Activated T-helper 1 cell treated with anti-CD3 and anti-CD28 coated beads, Interleukin-12 subunit alpha, Interleukin-12 subunit beta, Interleukin-2, Interleukin-4 antibody, amounts not matched to agents 30 ng/mL and 10 ng/mL and 1 ng/mL, durations not matched to agents 14 hours and 24 hours and 36 hours (primary cell): ENCODE measurements at regions of chr10 and their contacts with region 1.

Region 1: GRCh38 chr10:73848821-73849489 is 25.4 kb downstream of the CAMK2G start:
- DNase-seq: peak; percentile 88
- H3K4me3 Mint-ChIP-seq: peak overlapping the region; percentile 64
- H3K27ac Mint-ChIP-seq: peak overlapping the region; percentile 78
- H3K4me1 Mint-ChIP-seq: peaks cover 13% of the 10 kb centered on the region
- H3K27me3 Mint-ChIP-seq: peaks cover 1% of the 10 kb centered on the region

Region 2: GRCh38 chr10:73772280-73773151 is 76.4 kb before region 1 on chr10:
- intact Hi-C with region 1: loop called (anchors 1 kb)
- DNase-seq: peak; percentile 85
- H3K4me3 Mint-ChIP-seq: peak overlapping the region; percentile 94
- H3K27ac Mint-ChIP-seq: peak overlapping the region; percentile 91
- H3K4me1 Mint-ChIP-seq: peaks cover 67% of the 10 kb centered on the region
- H3K27me3 Mint-ChIP-seq: no peaks in the 10 kb centered on the region

Region 3: GRCh38 chr10:73874267-73875138 is 25.5 kb after region 1 on chr10 and contains the start of gene CAMK2G:
- intact Hi-C with region 1: loop called (anchors 1 kb)
- DNase-seq: peak; percentile 77
- H3K4me3 Mint-ChIP-seq: peak within 1 kb of the TSS; percentile 87
- H3K27ac Mint-ChIP-seq: peak within 1 kb of the TSS; percentile 58
- H3K4me1 Mint-ChIP-seq: peaks cover 72% of the 10 kb centered on the region
- H3K27me3 Mint-ChIP-seq: peaks cover 12% of the 10 kb centered on the region
- total RNA-seq, gene CAMK2G: 15.9 and 18.7 TPM in 2 replicates

Region 4: GRCh38 chr10:73940634-73941221 is 91.8 kb after region 1 on chr10:
- intact Hi-C with region 1: loop called (anchors 1 kb)
- DNase-seq: peak; percentile 80
- H3K4me3 Mint-ChIP-seq: no peak overlapping the region
- H3K27ac Mint-ChIP-seq: no peak overlapping the region
- H3K4me1 Mint-ChIP-seq: peaks cover 24% of the 10 kb centered on the region
- H3K27me3 Mint-ChIP-seq: peaks cover 15% of the 10 kb centered on the region

Region 5: GRCh38 chr10:74081192-74081803 is 232.3 kb after region 1 on chr10:
- intact Hi-C with region 1: loop called (anchors 1 kb)
- DNase-seq: peak; percentile 12
- H3K4me3 Mint-ChIP-seq: no peak overlapping the region
- H3K27ac Mint-ChIP-seq: peak overlapping the region; percentile 0
- H3K4me1 Mint-ChIP-seq: peaks cover 48% of the 10 kb centered on the region
- H3K27me3 Mint-ChIP-seq: no peaks in the 10 kb centered on the region